Pancreas (tissue), 10 donors: ENCODE measurements at regions of chr1 and their contacts with region 1.

Region 1: GRCh38 chr1:244599937-244600350 is 53.0 kb upstream of the DESI2 start:
- DNase-seq: no peak
- ATAC-seq: peak in 3 of 4 donors; percentile 32 to 72 (median 53)
- H3K4me3 ChIP-seq: no peak overlapping the region
- H3K27ac ChIP-seq: no peak overlapping the region
- H3K4me1 ChIP-seq: no peaks in the 10 kb centered on the region
- H3K27me3 ChIP-seq: no peaks in the 10 kb centered on the region
- CTCF ChIP-seq: no peak

Region 2: DNA sequence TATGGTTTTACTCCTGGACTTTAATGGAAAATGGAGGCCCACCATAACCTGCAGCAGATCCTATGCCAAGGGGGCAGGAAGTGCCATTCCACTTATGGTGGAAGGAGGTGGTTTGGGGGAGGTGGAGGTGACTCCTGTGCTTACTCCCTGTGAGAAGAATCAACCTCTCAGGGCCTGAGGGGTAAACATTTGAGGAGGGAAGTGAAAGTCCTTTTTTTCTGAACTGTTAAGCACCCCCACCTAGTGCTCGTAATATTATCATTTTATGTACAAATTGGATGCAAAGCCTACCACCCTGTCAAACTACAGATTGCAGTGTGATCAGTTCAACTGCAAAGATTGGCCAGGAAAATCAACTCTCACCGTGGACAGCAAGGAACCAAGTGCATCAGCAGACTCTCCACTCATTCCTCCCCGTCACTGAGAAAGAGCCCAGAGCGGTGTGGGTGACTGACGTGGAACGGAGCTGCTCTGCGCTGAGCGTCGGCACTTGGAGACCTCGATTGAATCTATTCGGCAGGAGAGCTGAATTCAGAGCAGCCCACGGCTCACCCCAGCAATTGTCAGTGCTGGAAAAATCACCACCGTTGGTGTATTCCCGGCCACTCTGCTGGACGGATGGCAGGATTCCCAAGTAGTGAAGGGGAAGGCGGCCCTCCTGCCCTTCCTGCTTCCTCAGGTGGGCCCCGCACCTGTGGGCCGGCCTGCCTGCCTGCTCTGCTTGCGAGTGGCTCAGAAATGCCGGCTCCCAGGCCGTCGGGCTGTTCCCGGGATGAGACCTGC is 188.7 kb after region 1 on chr1:
- intact Hi-C with region 1: loop called in 1 of 3 experiments (anchors 10 kb)
- DNase-seq: no peak
- ATAC-seq: no peak
- H3K4me3 ChIP-seq: no peak overlapping the region
- H3K27ac ChIP-seq: no peak overlapping the region
- H3K4me1 ChIP-seq: no peaks in the 10 kb centered on the region
- H3K27me3 ChIP-seq: no peaks in the 10 kb centered on the region
- CTCF ChIP-seq: no peak

Region 3: DNA sequence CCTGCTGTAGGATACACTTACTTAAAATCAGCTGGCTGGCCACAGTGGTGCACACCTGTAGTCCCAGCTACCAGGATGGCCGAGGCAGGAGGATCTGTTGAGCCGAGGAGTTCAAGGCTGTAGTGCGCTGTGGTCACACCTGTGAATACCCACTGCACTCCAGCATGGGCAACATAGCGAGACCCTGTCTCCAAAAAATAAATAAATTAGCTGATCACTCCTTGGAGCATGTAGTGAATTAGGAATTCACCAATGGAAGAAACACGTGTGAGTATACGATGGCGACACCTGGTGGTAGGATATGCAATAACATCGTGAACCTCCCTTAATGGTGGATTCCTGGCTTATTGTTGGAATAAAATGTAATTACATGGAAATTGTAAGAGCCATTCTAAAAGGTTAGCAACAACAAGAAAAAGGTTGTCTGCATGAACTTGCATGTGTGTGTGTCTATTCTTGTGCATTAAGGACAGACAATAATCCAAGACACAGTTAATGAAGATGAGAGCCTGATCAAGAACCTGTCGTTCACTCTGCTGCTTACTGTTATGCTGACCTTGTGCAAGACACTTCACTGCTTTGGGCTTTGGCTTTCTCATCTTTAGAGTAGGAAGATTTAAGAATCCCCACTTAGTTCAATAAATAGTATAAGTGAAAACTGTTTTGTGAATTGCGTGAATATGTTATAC is 196.9 kb after region 1 on chr1:
- intact Hi-C with region 1: loop called in 2 of 3 experiments (anchors 2 to 5 kb)
- DNase-seq: peak in 4 of 6 donors; percentile 38 to 74 (median 42)
- ATAC-seq: peak; percentile 69 to 94 (median 86)
- H3K4me3 ChIP-seq: no peak overlapping the region
- H3K27ac ChIP-seq: no peak overlapping the region
- H3K4me1 ChIP-seq: no peaks in the 10 kb centered on the region
- H3K27me3 ChIP-seq: no peaks in the 10 kb centered on the region
- CTCF ChIP-seq: peak; percentile 78 to 85 (median 84)

Region 4: GRCh38 chr1:245031041-245031440 is 431.1 kb after region 1 on chr1:
- intact Hi-C with region 1: loop called in 1 of 3 experiments (anchors 10 kb)
- DNase-seq: no peak
- ATAC-seq: no peak
- H3K4me3 ChIP-seq: no peak overlapping the region
- H3K27ac ChIP-seq: no peak overlapping the region
- H3K4me1 ChIP-seq: no peaks in the 10 kb centered on the region
- H3K27me3 ChIP-seq: no peaks in the 10 kb centered on the region
- CTCF ChIP-seq: no peak